ENCODE measurements at regions of chr9 and their contacts with region 1.

Region 1: GRCh38 chr9:74463825-74464224 is 33.3 kb upstream of the RORB start:
- DNase-seq: no peak
- H3K4me3 ChIP-seq: no peak overlapping the region
- H3K27ac ChIP-seq: no peak overlapping the region
- H3K4me1 ChIP-seq: no peaks in the 10 kb centered on the region
- H3K27me3 ChIP-seq: no peaks in the 10 kb centered on the region
- CTCF ChIP-seq: no peak
- EP300 ChIP-seq: no peak
- POLR2A ChIP-seq: no peak

Region 2: GRCh38 chr9:73548201-73548600 is 915.6 kb before region 1 on chr9:
- intact Hi-C with region 1: no loop called
- DNase-seq: no peak
- H3K4me3 ChIP-seq: no peak overlapping the region
- H3K27ac ChIP-seq: no peak overlapping the region
- H3K4me1 ChIP-seq: no peaks in the 10 kb centered on the region
- H3K27me3 ChIP-seq: no peaks in the 10 kb centered on the region
- CTCF ChIP-seq: no peak
- EP300 ChIP-seq: no peak
- POLR2A ChIP-seq: no peak

Region 3: GRCh38 chr9:74521009-74521408 is 57.2 kb after region 1 on chr9:
- intact Hi-C with region 1: loop called (anchors 10 kb)
- DNase-seq: no peak
- H3K4me3 ChIP-seq: no peak overlapping the region
- H3K27ac ChIP-seq: no peak overlapping the region
- H3K4me1 ChIP-seq: no peaks in the 10 kb centered on the region
- H3K27me3 ChIP-seq: no peaks in the 10 kb centered on the region
- CTCF ChIP-seq: no peak
- EP300 ChIP-seq: no peak
- POLR2A ChIP-seq: no peak